ENCODE measurements at regions of chrX and their contacts with region 1.

Region 1: DNA sequence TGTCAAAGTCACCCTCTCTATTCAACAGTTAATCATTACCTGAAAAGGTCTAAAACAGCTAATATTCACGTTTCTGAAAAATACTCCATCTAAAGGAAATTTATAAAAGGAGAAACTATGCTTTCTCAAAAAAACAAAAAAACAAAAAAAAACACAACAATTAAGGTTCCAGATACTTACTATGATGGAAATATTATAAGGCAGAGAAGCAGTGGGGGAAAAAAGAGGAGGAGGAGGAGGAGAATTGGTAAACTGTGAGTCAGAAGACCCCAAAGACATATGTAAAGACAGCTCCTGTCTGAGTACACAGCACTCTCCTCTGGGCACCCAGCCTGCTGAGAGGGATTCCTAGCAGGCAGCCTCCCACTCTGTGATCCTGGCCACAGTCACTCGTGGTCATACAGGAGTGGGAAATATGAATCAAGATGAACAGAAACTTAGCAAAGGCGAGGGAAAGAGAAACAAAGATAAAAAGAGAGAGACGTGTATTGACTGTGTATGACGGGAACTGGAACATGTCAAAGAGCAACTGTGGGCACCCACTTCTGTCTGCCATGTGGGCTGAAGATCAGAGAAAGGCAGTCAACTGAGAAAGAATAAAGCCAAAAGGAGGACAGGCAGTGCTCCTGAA is 12.5 kb downstream of the KLHL15 start:
- DNase-seq: no peak
- ATAC-seq: no peak
- H3K4me3 ChIP-seq: no peak overlapping the region
- H3K27ac ChIP-seq: no peak overlapping the region
- H3K4me1 ChIP-seq: no peaks in the 10 kb centered on the region
- H3K27me3 ChIP-seq: peaks cover 0 to 17% (median 0%) of the 10 kb centered on the region in 3 donors
- CTCF ChIP-seq: no peak

Region 2: GRCh38 chrX:23919706-23920320 is 94.7 kb before region 1 on chrX:
- intact Hi-C with region 1: loop called in 1 of 2 experiments (anchors 10 kb)
- DNase-seq: no peak
- ATAC-seq: no peak
- H3K4me3 ChIP-seq: no peak overlapping the region
- H3K27ac ChIP-seq: no peak overlapping the region
- H3K4me1 ChIP-seq: no peaks in the 10 kb centered on the region
- H3K27me3 ChIP-seq: no peaks in the 10 kb centered on the region
- CTCF ChIP-seq: no peak

Region 3: GRCh38 chrX:23993012-23993633 is 21.4 kb before region 1 on chrX:
- intact Hi-C with region 1: loop called in 1 of 2 experiments (anchors 1 kb)
- DNase-seq: no peak
- ATAC-seq: no peak
- H3K4me3 ChIP-seq: no peak overlapping the region
- H3K27ac ChIP-seq: no peak overlapping the region
- H3K4me1 ChIP-seq: no peaks in the 10 kb centered on the region
- H3K27me3 ChIP-seq: peaks cover 0 to 15% (median 0%) of the 10 kb centered on the region in 3 donors
- CTCF ChIP-seq: no peak

Measured in psoas muscle (tissue), 8 donors.